ENCODE measurements at regions of chr22 and their contacts with region 1.

Region 1: GRCh38 chr22:33000342-33001280 is 57.6 kb downstream of the SYN3 start:
- DNase-seq: peak; percentile 82
- H3K4me3 ChIP-seq: no peak overlapping the region; a peak in 1 of 4 replicates
- H3K27ac ChIP-seq: no peak overlapping the region
- H3K4me1 ChIP-seq: no peaks in the 10 kb centered on the region; a peak in 1 of 4 replicates
- H3K27me3 ChIP-seq: no peaks in the 10 kb centered on the region
- CTCF ChIP-seq: peak; percentile 84
- EP300 ChIP-seq: no peak
- RAD21 ChIP-seq: peak; percentile 94

Region 2: GRCh38 chr22:33012833-33013450 is 12.3 kb after region 1 on chr22:
- CTCF ChIA-PET with region 1: interaction called, 27 read pairs
- POLR2A ChIA-PET with region 1: no interaction called
- DNase-seq: no peak
- H3K4me3 ChIP-seq: no peak overlapping the region
- H3K27ac ChIP-seq: no peak overlapping the region
- H3K4me1 ChIP-seq: no peaks in the 10 kb centered on the region
- H3K27me3 ChIP-seq: no peaks in the 10 kb centered on the region
- CTCF ChIP-seq: no peak
- EP300 ChIP-seq: no peak
- RAD21 ChIP-seq: no peak

Measured in SK-N-SH (cell line).